B cell (primary cell): ENCODE measurements at regions of chr20 and their contacts with region 1.

Region 1: GRCh38 chr20:49219089-49219923 is at the start of gene DDX27:
- DNase-seq: peak; percentile 99
- ATAC-seq: peak; percentile 86
- H3K4me3 ChIP-seq: peak within 1 kb of the TSS; percentile 68 to 98 (median 82)
- H3K4me3 Mint-ChIP-seq: peak within 1 kb of the TSS; percentile 90
- H3K27ac ChIP-seq: peak within 1 kb of the TSS; percentile 95 to 97
- H3K27ac Mint-ChIP-seq: peak within 1 kb of the TSS; percentile 93
- H3K4me1 ChIP-seq: peaks cover 16 to 26% of the 10 kb centered on the region in 2 donors
- H3K4me1 Mint-ChIP-seq: peaks cover 24% of the 10 kb centered on the region
- H3K27me3 ChIP-seq: no peaks in the 10 kb centered on the region
- H3K27me3 Mint-ChIP-seq: no peaks in the 10 kb centered on the region
- CTCF ChIP-seq: no peak
- total RNA-seq, gene DDX27: 74.6 and 75.3 TPM in 2 replicates

Region 2: DNA sequence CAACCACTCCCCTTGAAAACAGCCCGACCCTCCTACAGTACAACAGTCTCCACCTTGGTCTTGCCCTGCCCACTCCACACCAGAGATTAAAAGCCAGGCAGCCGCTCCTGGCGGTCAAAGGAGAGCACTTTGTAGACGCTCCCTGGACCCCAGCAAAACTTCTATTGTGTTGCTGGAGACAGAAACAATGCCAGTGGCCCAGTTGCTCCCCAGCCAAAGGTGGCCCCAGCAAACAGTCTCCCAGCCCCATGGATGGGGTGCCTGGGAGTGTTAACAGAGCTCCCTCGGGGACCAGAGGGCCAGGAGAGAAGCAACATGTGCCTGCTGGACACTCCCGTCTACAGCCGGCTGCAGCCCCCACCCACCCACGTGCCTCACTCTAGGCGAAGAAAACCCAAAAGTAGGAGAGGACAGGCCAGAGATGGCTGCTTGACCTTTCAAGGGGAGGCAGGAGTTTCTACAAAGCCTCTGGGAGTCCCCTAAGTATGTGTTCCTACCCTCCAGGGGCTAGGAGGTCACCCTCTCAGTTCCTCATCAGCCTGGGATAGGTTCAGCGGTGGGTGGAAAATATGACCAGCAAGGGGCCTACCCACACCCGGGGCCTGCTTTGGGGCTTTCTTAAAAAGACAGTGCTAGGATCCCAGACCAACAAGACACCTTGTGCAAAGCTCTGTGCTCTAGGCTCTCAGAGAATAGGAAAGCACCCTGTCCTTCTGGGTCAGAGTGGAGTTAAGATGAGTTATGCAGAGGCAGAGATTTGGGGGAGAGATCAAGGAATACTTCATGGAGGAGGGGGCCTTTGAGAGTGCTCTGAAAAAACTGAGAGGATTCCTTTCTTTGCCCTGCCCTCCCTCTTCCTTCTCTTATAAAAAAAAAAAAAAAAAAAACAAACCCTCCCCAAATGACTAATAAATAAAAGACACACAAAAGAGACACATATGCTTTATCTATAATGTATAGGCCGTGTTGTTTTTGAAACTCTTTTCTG is 372.5 kb before region 1 on chr20:
- CTCF ChIA-PET with region 1: no interaction called
- POLR2A ChIA-PET with region 1: interaction called, 12 read pairs
- intact Hi-C with region 1: no loop called
- DNase-seq: peak; percentile 67
- ATAC-seq: peak; percentile 95
- H3K4me3 ChIP-seq: no peak overlapping the region
- H3K4me3 Mint-ChIP-seq: peak overlapping the region; percentile 64
- H3K27ac ChIP-seq: no peak overlapping the region
- H3K27ac Mint-ChIP-seq: peak overlapping the region; percentile 74
- H3K4me1 ChIP-seq: peaks cover 24 to 25% of the 10 kb centered on the region in 2 donors
- H3K4me1 Mint-ChIP-seq: peaks cover 41% of the 10 kb centered on the region
- H3K27me3 ChIP-seq: no peaks in the 10 kb centered on the region
- H3K27me3 Mint-ChIP-seq: no peaks in the 10 kb centered on the region
- CTCF ChIP-seq: no peak

Region 3: GRCh38 chr20:49132995-49133478 is 86.3 kb before region 1 on chr20:
- CTCF ChIA-PET with region 1: interaction called, 149 read pairs
- POLR2A ChIA-PET with region 1: interaction called, 3 read pairs
- intact Hi-C with region 1: no loop called
- DNase-seq: peak; percentile 67
- ATAC-seq: no peak
- H3K4me3 ChIP-seq: no peak overlapping the region
- H3K4me3 Mint-ChIP-seq: no peak overlapping the region
- H3K27ac ChIP-seq: peak overlapping the region in 1 of 2 donors; percentile 34
- H3K27ac Mint-ChIP-seq: no peak overlapping the region
- H3K4me1 ChIP-seq: no peaks in the 10 kb centered on the region
- H3K4me1 Mint-ChIP-seq: no peaks in the 10 kb centered on the region
- H3K27me3 ChIP-seq: no peaks in the 10 kb centered on the region
- H3K27me3 Mint-ChIP-seq: no peaks in the 10 kb centered on the region
- CTCF ChIP-seq: peak; percentile 66

Region 4: GRCh38 chr20:49186535-49187329 is 32.6 kb before region 1 on chr20:
- CTCF ChIA-PET with region 1: interaction called, 22 read pairs
- POLR2A ChIA-PET with region 1: interaction called, 6 read pairs
- intact Hi-C with region 1: loop called (anchors 1 kb)
- DNase-seq: peak; percentile 68
- ATAC-seq: no peak
- H3K4me3 ChIP-seq: peak overlapping the region; percentile 54 to 74 (median 67)
- H3K4me3 Mint-ChIP-seq: peak overlapping the region; percentile 88
- H3K27ac ChIP-seq: peak overlapping the region; percentile 79 to 84
- H3K27ac Mint-ChIP-seq: peak overlapping the region; percentile 74
- H3K4me1 ChIP-seq: peaks cover 14 to 20% of the 10 kb centered on the region in 2 donors
- H3K4me1 Mint-ChIP-seq: peaks cover 46% of the 10 kb centered on the region
- H3K27me3 ChIP-seq: no peaks in the 10 kb centered on the region
- H3K27me3 Mint-ChIP-seq: no peaks in the 10 kb centered on the region
- CTCF ChIP-seq: no peak

Region 5: GRCh38 chr20:49230561-49231193 is 11.4 kb after region 1 on chr20:
- CTCF ChIA-PET with region 1: interaction called, 16 read pairs
- POLR2A ChIA-PET with region 1: no interaction called
- intact Hi-C with region 1: no loop called
- DNase-seq: peak; percentile 78
- ATAC-seq: peak; percentile 95
- H3K4me3 ChIP-seq: no peak overlapping the region
- H3K4me3 Mint-ChIP-seq: peak overlapping the region; percentile 32
- H3K27ac ChIP-seq: peak overlapping the region; percentile 64 to 78
- H3K27ac Mint-ChIP-seq: peak overlapping the region; percentile 84
- H3K4me1 ChIP-seq: peaks cover 14 to 20% of the 10 kb centered on the region in 2 donors
- H3K4me1 Mint-ChIP-seq: peaks cover 16% of the 10 kb centered on the region
- H3K27me3 ChIP-seq: no peaks in the 10 kb centered on the region
- H3K27me3 Mint-ChIP-seq: no peaks in the 10 kb centered on the region
- CTCF ChIP-seq: no peak

Region 6: GRCh38 chr20:49278036-49278817 is 58.9 kb after region 1 on chr20 and contains the start of gene ZNFX1:
- CTCF ChIA-PET with region 1: interaction called, 6 read pairs
- POLR2A ChIA-PET with region 1: interaction called, 7 read pairs
- intact Hi-C with region 1: loop called (anchors 1 kb)
- DNase-seq: peak; percentile 100
- ATAC-seq: peak; percentile 82
- H3K4me3 ChIP-seq: peak within 1 kb of the TSS; percentile 78 to 100 (median 96)
- H3K4me3 Mint-ChIP-seq: peak within 1 kb of the TSS; percentile 99
- H3K27ac ChIP-seq: peak within 1 kb of the TSS; percentile 89 to 98
- H3K27ac Mint-ChIP-seq: peak within 1 kb of the TSS; percentile 98
- H3K4me1 ChIP-seq: peaks cover 50 to 64% of the 10 kb centered on the region in 2 donors
- H3K4me1 Mint-ChIP-seq: peaks cover 62% of the 10 kb centered on the region
- H3K27me3 ChIP-seq: no peaks in the 10 kb centered on the region
- H3K27me3 Mint-ChIP-seq: no peaks in the 10 kb centered on the region
- CTCF ChIP-seq: no peak
- total RNA-seq, gene ZNFX1: 37.9 and 38.8 TPM in 2 replicates